ENCODE measurements at regions of chr1 and their contacts with region 1.

Region 1: DNA sequence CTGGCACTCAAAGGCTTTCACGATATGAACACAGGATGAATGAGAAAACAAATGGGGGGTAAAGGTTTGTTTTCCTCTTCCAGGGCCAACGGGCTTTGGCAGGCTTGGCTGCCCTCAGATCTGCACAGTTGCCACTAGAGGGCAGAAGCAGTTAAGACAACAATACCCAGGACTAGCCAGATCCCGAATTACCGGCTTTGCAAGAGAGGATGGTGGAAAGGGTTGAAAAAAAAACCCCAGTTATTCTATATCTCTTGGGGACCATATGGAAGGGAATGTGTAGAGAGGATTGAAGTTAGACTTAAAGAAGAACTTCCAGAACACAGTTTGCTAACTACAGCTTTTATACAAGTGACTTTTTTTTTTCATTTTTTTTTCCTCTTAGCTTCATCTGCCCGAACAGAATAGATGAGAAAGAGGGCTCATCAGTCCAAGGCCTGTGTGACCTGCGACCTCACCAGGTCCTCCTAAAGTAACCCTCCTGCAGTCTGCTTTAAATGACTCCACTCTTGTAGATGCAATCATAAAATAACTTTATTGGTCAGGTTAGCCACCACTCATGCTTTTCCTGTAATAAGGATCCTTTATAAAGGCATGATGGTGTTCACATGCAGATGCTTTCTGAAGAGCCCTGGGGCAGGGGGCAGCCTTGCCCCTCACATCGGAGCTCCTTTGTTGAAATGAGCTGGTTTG is 10.7 kb downstream of the FMOD start:
- DNase-seq: peak; percentile 52
- H3K4me3 ChIP-seq: no peak overlapping the region
- H3K27ac ChIP-seq: no peak overlapping the region
- H3K4me1 ChIP-seq: peaks cover 15% of the 10 kb centered on the region
- H3K27me3 ChIP-seq: no peaks in the 10 kb centered on the region
- CTCF ChIP-seq: peak; percentile 95

Region 2: DNA sequence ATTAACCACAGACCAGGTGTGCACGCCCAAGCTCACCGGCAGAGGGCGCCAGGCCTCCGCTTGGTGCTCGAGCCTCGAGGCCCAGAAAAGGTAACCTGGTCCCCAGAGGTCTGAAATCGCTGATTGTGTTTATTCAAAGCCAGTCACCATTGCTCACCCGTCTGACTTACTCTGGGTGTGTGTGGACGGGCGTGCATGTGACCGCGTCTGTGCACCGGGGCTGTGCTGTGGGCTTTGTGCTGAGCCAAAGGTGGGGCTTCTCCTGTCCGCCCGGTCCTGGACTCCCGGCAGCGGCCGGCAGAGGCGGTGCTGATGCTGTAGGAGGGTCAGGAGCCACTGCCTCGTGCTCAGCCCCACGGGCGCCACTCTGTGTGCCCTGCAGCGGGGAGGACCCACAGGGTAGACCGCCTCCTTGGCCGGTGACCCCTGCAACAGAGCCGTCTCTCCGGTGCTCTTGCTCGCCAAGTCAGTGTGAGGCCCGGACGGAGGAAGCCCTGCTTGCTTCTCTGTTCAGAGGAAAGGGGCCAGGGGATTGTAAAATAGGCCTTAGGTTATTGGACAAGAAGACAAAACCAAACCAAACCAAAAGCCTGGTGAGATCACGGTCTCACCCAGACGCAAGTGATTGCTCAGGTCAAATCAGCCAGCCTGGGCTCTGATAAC is 66.9 kb before region 1 on chr1:
- intact Hi-C with region 1: loop called (anchors 5 kb)
- DNase-seq: peak; percentile 85
- H3K4me3 ChIP-seq: peak overlapping the region; percentile 58
- H3K27ac ChIP-seq: peak overlapping the region; percentile 96
- H3K4me1 ChIP-seq: peaks cover 80% of the 10 kb centered on the region
- H3K27me3 ChIP-seq: no peaks in the 10 kb centered on the region
- CTCF ChIP-seq: peak; percentile 99

Region 3: DNA sequence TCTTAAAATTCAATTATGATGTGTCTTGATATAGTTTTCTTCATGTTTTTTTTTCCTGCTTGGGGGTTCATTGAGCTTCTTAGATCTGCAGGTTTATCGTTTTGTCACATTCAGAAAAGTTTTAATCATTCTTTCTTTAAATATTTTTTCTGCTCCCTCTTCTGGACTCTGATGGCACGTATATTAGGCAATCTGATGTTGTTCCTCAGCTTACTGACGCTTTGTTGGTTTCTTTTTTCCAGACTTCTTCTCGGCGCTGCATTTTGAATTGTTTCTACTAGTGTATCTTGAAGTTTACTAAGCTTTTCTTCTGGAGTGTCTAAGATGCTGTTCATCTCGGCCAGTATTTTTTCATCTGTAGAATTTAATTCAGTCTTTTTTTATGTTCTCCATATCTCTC is 55.5 kb after region 1 on chr1:
- intact Hi-C with region 1: no loop called
- DNase-seq: no peak
- H3K4me3 ChIP-seq: no peak overlapping the region
- H3K27ac ChIP-seq: no peak overlapping the region
- H3K4me1 ChIP-seq: no peaks in the 10 kb centered on the region
- H3K27me3 ChIP-seq: no peaks in the 10 kb centered on the region
- CTCF ChIP-seq: no peak

Region 4: GRCh38 chr1:203440771-203441170 is 100.5 kb after region 1 on chr1:
- intact Hi-C with region 1: loop called (anchors 10 kb)
- DNase-seq: peak; percentile 76
- H3K4me3 ChIP-seq: no peak overlapping the region
- H3K27ac ChIP-seq: peak overlapping the region; percentile 56
- H3K4me1 ChIP-seq: peaks cover 19% of the 10 kb centered on the region
- H3K27me3 ChIP-seq: no peaks in the 10 kb centered on the region
- CTCF ChIP-seq: peak; percentile 76

Region 5: DNA sequence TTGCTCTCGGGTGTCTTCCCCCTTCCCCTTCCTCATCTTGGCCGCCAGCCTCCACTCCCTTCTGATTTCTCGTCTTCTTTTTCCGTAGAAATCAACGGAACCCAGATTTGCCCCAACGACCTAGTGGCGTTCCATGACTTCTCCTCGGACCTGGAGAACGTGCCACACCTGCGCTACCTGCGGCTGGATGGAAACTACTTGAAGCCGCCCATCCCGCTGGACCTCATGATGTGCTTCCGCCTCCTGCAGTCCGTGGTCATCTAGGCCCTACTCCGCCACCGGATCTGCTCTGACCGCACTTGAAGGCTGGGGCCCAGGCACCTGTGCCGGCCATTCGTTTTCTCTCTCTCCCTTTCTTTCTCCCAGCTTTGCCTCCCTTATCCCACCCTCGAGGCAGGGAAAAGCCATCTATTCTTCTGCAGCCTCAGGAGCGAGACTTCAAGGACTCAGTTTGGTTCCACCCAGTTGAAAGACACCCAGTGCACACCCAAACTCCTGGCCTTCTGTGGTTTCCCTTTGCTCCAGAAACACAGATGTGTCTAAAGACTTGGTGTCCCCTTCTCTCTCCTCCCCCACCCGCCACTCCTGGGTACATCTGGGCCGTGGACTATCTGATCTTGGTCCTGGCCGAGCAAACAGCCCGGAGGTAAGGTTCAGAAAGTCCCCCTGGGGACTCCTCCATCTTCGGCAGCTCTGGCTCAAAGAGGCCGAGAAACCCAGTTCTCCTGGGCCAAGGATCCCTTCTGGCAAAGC is 146.5 kb after region 1 on chr1:
- intact Hi-C with region 1: loop called (anchors 5 kb)
- DNase-seq: no peak
- H3K4me3 ChIP-seq: peak overlapping the region; percentile 61
- H3K27ac ChIP-seq: peak overlapping the region; percentile 88
- H3K4me1 ChIP-seq: peaks cover 29% of the 10 kb centered on the region
- H3K27me3 ChIP-seq: no peaks in the 10 kb centered on the region
- CTCF ChIP-seq: no peak

Region 6: GRCh38 chr1:203702130-203702577 is 361.9 kb after region 1 on chr1:
- intact Hi-C with region 1: loop called (anchors 5 kb)
- DNase-seq: no peak
- H3K4me3 ChIP-seq: no peak overlapping the region
- H3K27ac ChIP-seq: no peak overlapping the region
- H3K4me1 ChIP-seq: peaks cover 15% of the 10 kb centered on the region
- H3K27me3 ChIP-seq: no peaks in the 10 kb centered on the region
- CTCF ChIP-seq: peak; percentile 84